Left ventricle myocardium inferior (tissue), 1 donor: ENCODE measurements at regions of chr17 and their contacts with region 1.

Region 1: DNA sequence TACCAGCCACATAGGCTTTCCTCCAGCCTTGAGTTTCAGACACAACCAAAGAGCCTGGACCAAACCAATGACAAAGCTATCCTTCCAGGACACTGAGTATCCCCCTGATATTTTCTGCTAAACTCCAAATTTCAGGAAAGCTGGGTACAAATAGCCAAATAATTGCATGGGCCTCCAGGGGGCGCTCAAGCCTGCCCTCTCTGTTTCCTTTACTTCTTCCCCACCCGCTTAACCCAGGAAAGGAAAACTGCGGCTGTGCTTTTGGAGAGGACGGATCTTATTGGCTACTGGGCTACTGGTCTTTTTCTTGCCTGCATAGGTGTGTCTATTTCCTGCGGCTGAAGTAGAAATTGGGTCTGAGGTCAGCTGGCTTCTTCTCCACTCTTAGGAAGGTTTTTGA is 30.1 kb downstream of the GNGT2 start:
- DNase-seq: peak; percentile 67
- H3K4me3 ChIP-seq: no peak overlapping the region
- H3K27ac ChIP-seq: no peak overlapping the region
- H3K4me1 ChIP-seq: no peaks in the 10 kb centered on the region
- H3K27me3 ChIP-seq: peaks cover 16% of the 10 kb centered on the region
- CTCF ChIP-seq: peak; percentile 77

Region 2: DNA sequence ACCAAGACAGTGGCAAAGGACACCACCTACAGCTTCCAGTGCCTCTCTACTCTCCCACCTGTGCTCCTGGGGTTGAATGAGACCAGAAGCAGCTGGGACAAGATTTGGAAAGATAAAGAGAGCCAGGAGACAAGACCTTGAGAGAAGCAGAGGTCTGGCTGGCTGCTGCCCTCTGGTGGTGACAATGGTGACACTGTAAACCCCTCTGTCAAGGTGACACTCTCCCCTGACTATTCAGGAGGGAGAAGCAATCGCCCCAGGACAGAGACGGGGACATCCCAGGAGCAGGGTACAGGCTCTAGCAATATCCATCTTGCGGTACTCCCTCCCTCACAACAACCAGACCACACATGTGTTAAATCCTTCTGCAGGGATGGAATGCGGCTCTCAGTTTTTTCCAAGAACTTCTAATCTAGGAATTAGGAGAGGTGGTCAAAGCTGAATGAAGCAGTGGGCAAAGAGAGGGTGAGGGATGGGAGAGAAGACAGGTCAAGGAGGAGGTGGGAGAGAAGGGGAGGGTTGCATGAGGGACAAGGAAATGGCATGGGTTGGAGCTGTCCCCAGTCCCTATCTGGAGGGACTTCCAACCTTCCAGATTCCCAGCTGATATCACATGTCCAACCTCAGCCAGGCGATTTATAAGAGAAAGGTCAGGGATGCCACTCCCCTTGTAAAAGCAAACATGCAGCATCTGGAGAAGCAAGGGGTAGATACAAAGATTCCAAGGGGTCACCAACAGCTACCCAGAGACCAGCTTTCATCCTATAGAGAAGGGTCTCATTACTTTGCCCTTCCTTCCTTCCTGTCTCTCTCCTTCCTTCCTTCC is 47.3 kb after region 1 on chr17:
- intact Hi-C with region 1: loop called (anchors 5 kb)
- DNase-seq: peak; percentile 75
- H3K4me3 ChIP-seq: no peak overlapping the region
- H3K27ac ChIP-seq: no peak overlapping the region
- H3K4me1 ChIP-seq: peaks cover 49% of the 10 kb centered on the region
- H3K27me3 ChIP-seq: peaks cover 47% of the 10 kb centered on the region
- CTCF ChIP-seq: peak; percentile 92

Region 3: DNA sequence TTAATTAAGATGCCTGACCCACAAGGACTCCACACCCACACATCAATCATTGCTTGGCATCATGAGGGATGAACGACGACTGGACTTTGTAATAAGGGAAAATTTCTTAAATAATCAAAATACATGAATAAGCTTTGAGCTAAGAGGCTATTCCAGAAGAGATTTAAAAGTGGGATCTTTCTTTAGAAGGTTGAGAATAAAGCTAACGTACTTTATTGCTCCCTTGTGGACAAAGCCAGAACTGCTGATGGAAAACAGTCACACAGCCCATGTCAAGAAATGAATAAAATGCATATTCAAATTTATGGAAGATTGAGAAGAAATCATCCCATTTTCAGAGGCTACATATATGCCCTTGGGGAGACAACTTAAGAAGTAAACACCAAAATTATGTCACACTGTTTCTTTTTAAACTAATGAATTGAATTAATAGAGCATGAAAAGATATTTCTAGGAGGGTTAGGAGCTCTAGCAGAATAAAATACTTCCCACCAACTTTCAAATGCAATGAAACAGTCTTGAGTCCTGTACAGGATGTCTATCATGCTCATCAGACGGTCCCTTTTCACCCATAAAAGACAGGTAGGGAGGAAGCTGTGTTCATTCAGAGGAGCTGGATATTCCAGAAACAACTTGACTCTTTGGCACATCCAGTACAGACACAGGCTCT is 110.5 kb after region 1 on chr17:
- intact Hi-C with region 1: loop called (anchors 5 kb)
- DNase-seq: no peak
- H3K4me3 ChIP-seq: no peak overlapping the region
- H3K27ac ChIP-seq: no peak overlapping the region
- H3K4me1 ChIP-seq: no peaks in the 10 kb centered on the region
- H3K27me3 ChIP-seq: no peaks in the 10 kb centered on the region
- CTCF ChIP-seq: peak; percentile 79